ENCODE measurements at regions of chr19 and their contacts with region 1.

Region 1: DNA sequence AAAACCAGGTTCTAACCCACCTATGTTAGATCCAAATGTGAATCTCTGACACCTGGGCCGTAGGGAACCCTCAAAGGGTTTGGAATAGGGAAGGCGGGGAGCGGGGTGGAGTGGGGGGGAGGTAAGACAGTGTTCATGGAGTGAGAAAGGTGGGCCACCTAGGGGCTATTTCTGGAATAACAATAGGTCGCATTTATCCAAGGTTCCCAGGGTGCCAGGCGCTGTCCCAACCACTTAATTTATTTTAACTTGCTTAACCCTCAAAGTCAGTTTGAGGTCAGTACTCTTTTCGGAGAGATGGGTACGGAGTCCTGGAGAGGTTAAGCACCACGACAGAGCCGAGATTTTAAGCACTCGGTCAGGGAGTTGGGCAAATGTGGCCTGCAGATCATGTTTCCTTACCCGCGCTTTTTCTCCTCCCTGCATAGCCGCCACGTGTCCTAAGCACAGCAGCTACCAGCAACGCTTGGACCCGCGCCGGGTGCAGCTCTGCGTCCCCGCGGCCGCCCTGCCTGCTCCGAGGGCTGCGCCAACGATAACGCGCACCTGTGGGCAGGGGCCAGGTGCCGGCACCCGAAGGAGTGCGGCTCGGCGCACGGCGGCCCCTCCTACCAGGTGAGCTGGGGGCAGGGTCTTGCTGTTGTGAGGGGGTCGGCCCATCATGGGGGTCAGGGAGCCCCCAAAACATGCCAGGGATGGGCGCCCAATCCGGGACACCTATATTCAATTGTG is 25.0 kb upstream of the FXYD3 start:
- DNase-seq: peak; percentile 36
- ATAC-seq: peak; percentile 95
- H3K4me3 ChIP-seq: peak overlapping the region; percentile 15 to 44
- H3K27ac ChIP-seq: no peak overlapping the region
- H3K4me1 ChIP-seq: peaks cover 8% of the 10 kb centered on the region
- H3K27me3 ChIP-seq: no peaks in the 10 kb centered on the region
- CTCF ChIP-seq: peak; percentile 93

Region 2: DNA sequence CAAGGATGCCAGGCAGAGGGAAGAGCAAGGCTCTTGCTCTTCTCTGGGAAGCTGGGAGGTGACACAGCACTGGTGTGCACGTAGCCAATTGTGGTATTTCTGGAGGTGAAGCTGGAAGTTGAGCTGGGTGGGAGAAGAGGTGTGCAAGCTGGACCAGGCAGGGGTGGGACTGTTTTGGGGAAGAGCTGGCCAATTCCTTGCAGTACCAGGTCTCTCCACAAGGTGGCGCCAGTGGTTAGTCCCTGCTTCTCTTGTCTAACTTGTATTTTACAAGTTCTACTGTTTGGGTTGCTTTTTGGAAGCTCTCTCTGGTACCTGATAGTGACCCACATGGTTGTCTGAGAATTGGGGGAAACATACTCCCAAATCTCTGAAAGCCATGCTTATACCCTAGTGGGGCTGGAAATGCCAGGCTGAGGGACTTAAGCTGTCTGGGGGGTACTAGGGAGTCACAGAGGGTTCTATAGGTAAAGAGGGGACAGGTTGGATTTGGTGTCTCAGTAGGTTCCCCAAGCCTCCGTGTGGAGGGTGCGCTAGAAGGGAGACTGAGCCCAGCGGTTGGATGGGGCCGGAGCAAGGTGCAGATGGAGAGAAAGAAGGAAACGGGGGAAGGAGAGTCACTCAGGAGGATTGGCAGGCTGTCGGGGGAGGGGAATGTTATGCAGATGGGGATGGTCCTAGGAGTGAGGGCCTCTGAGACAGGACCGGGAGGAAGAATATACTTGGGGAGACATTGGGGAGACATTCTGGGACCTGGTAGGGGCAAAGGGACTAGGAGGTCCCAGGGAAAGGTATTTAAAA is 46.2 kb before region 1 on chr19:
- CTCF ChIA-PET with region 1: interaction called, 7 read pairs
- POLR2A ChIA-PET with region 1: no interaction called
- in situ Hi-C with region 1: no loop called
- intact Hi-C with region 1: loop called (anchors 10 kb)
- DNase-seq: peak; percentile 63
- ATAC-seq: 0 out of 2 replicates have a peak, but pooled peaks have one; percentile 11
- H3K4me3 ChIP-seq: no peak overlapping the region
- H3K27ac ChIP-seq: no peak overlapping the region
- H3K4me1 ChIP-seq: peaks cover 10% of the 10 kb centered on the region
- H3K27me3 ChIP-seq: no peaks in the 10 kb centered on the region
- CTCF ChIP-seq: peak; percentile 99

Region 3: GRCh38 chr19:35154525-35155406 is 64.1 kb after region 1 on chr19 and contains the start of gene FXYD5:
- CTCF ChIA-PET with region 1: no interaction called
- POLR2A ChIA-PET with region 1: no interaction called
- in situ Hi-C with region 1: no loop called
- intact Hi-C with region 1: no loop called
- DNase-seq: no peak
- ATAC-seq: peak; percentile 87
- H3K4me3 ChIP-seq: peak within 1 kb of the TSS; percentile 71 to 83
- H3K27ac ChIP-seq: peak within 1 kb of the TSS; percentile 72
- H3K4me1 ChIP-seq: peaks cover 10% of the 10 kb centered on the region
- H3K27me3 ChIP-seq: no peaks in the 10 kb centered on the region
- CTCF ChIP-seq: no peak
- total RNA-seq, gene FXYD5: 33.6 TPM